ENCODE measurements at regions of chr6 and their contacts with region 1.

Region 1: GRCh38 chr6:133568970-133569889 is 319.7 kb upstream of the TCF21 start:
- DNase-seq: peak; percentile 35
- H3K4me3 ChIP-seq: peak overlapping the region; percentile 29 to 30
- H3K27ac ChIP-seq: peak overlapping the region; percentile 48 to 69
- H3K4me1 ChIP-seq: no peaks in the 10 kb centered on the region
- H3K27me3 ChIP-seq: no peaks in the 10 kb centered on the region
- CTCF ChIP-seq: peak; percentile 92 to 98 (median 97)
- POLR2A ChIP-seq: no peak

Region 2: DNA sequence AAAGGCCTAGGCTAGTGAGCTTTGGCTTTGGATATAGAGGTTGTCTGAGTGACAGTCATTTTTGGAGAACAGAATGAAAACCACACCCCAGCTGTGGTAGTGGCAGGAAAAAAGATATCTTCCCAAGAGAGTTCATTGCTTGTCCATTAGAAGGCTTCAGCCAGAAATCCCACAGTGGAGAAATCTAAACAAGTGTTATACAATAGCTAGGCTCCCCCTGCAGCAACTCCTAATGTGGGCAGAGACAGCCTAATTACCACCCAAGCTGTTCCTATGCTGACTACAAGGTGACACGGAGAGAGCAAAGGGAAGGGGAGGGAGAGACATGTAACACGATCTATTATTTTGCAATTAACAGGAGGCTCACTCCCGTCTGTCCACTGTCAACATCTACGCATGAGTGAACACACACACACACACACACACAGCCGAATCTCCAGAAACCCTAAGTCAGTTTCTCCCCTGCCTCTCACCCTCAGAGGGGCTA is 172.2 kb after region 1 on chr6:
- intact Hi-C with region 1: no loop called
- DNase-seq: no peak
- H3K4me3 ChIP-seq: no peak overlapping the region
- H3K27ac ChIP-seq: no peak overlapping the region
- H3K4me1 ChIP-seq: no peaks in the 10 kb centered on the region
- H3K27me3 ChIP-seq: no peaks in the 10 kb centered on the region
- CTCF ChIP-seq: no peak
- POLR2A ChIP-seq: no peak

Region 3: GRCh38 chr6:133916650-133917151 is 347.5 kb after region 1 on chr6:
- intact Hi-C with region 1: loop called (anchors 5 kb)
- DNase-seq: peak; percentile 91 to 93
- H3K4me3 ChIP-seq: no peak overlapping the region
- H3K27ac ChIP-seq: peak overlapping the region in 1 of 2 donors; percentile 31
- H3K4me1 ChIP-seq: no peaks in the 10 kb centered on the region
- H3K27me3 ChIP-seq: no peaks in the 10 kb centered on the region
- CTCF ChIP-seq: peak; percentile 74 to 90 (median 84)
- POLR2A ChIP-seq: no peak